ENCODE measurements at regions of chr17 and their contacts with region 1.

Region 1: GRCh38 chr17:44218344-44219107 is 949 bp downstream of the UBTF start:
- DNase-seq: peak; percentile 84 to 88 (median 86)
- H3K4me3 ChIP-seq: peak overlapping the region; percentile 22 to 90 (median 60)
- H3K4me3 Mint-ChIP-seq: peak overlapping the region; percentile 63 to 68
- H3K27ac ChIP-seq: peak overlapping the region; percentile 4 to 68
- H3K27ac Mint-ChIP-seq: peak overlapping the region in 6 of 7 donors; percentile 32 to 82 (median 68)
- H3K4me1 ChIP-seq: peaks cover 36 to 52% of the 10 kb centered on the region in 2 donors
- H3K4me1 Mint-ChIP-seq: peaks cover 54% of the 10 kb centered on the region
- H3K27me3 ChIP-seq: no peaks in the 10 kb centered on the region
- H3K27me3 Mint-ChIP-seq: peaks cover 0 to 4% (median 4%) of the 10 kb centered on the region in 3 donors
- CTCF ChIP-seq: peak; percentile 78

Region 2: DNA sequence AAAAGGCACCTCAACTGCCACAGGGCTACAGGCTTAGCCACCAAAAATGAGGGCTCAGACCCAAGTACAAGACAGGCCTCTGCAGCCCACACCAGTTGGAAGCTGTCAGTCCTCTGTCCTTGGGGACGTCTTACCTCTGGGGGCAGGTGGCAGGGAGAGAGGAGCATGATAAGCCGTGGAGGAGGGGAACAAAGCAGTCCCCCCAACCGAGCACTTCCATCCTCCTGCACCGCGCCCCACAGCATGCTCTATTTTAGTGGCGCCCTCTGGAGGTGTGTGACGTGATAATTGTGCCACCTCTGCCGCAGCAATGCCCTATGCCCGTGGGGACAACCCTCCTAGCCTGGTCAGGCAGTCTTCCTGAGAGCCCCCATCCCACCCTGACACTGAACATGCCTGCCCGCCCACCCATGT is 134.4 kb before region 1 on chr17:
- intact Hi-C with region 1: no loop called
- DNase-seq: no peak
- H3K4me3 ChIP-seq: no peak overlapping the region
- H3K4me3 Mint-ChIP-seq: no peak overlapping the region
- H3K27ac ChIP-seq: no peak overlapping the region
- H3K27ac Mint-ChIP-seq: peak overlapping the region in 2 of 7 donors; percentile 11 to 71
- H3K4me1 ChIP-seq: peaks cover 10 to 14% of the 10 kb centered on the region in 2 donors
- H3K4me1 Mint-ChIP-seq: peaks cover 13% of the 10 kb centered on the region
- H3K27me3 ChIP-seq: no peaks in the 10 kb centered on the region
- H3K27me3 Mint-ChIP-seq: peaks cover 0 to 5% (median 0%) of the 10 kb centered on the region in 3 donors
- CTCF ChIP-seq: peak; percentile 37

Region 3: DNA sequence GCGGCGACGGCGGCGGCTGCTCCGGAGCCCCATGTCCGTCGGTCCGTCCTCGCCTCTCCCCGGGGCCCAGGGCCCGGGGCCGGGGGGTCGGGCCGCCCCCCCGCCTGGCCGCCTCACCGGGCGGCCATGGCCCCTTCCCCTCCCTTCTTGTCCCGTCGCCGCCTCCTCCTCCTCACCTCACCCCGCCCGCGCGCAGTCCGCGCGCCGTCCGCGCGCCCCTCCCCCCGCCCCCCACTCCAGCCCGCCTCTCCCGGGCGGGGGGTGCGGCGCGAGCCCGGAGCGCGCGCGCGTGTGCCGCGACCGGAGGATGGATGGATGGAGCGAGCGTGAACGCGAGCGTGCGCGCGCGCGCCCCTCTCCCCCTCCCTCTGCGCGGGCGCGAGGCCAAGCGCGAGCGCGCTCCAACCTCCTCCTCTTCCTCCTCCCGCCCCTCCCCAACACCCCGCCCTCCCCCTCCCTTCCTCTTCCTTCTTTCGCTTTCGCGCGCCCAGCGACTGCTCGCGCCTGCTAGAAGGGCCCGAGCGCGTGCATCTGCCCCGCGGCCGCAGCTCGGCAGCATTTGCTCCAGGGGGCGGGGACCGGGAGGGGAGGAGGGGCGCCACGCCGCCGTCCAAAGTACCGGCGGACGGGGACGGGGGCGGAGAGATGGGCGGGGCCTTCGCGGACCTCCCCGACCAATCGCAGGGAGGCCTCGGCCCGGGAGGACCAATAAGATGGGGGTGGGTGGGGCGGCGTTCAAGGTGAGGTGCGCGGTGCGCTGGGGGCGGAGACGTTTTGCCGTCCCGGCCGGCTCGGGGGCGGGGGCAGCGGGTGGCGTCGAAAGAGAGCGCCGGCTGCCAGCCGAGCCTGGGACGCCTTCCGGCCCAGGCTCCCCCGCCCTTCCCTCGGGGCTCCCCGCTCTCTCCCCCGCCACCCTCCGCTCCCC is 18.7 kb before region 1 on chr17 and contains the start of gene ATXN7L3:
- intact Hi-C with region 1: loop called in 1 of 2 experiments (anchors 1 kb)
- DNase-seq: peak; percentile 94 to 98 (median 96)
- H3K4me3 ChIP-seq: peak within 1 kb of the TSS; percentile 94 to 97 (median 97)
- H3K4me3 Mint-ChIP-seq: peak within 1 kb of the TSS; percentile 91 to 92
- H3K27ac ChIP-seq: peak within 1 kb of the TSS; percentile 94
- H3K27ac Mint-ChIP-seq: peak within 1 kb of the TSS; percentile 92 to 98 (median 95)
- H3K4me1 ChIP-seq: peaks cover 48 to 51% of the 10 kb centered on the region in 2 donors
- H3K4me1 Mint-ChIP-seq: peaks cover 53% of the 10 kb centered on the region
- H3K27me3 ChIP-seq: no peaks in the 10 kb centered on the region
- H3K27me3 Mint-ChIP-seq: peaks cover 0 to 2% (median 0%) of the 10 kb centered on the region in 3 donors
- CTCF ChIP-seq: no peak
- polyA plus RNA-seq, gene ATXN7L3: 8.5 to 60.9 (median 9.9) TPM

Region 4: DNA sequence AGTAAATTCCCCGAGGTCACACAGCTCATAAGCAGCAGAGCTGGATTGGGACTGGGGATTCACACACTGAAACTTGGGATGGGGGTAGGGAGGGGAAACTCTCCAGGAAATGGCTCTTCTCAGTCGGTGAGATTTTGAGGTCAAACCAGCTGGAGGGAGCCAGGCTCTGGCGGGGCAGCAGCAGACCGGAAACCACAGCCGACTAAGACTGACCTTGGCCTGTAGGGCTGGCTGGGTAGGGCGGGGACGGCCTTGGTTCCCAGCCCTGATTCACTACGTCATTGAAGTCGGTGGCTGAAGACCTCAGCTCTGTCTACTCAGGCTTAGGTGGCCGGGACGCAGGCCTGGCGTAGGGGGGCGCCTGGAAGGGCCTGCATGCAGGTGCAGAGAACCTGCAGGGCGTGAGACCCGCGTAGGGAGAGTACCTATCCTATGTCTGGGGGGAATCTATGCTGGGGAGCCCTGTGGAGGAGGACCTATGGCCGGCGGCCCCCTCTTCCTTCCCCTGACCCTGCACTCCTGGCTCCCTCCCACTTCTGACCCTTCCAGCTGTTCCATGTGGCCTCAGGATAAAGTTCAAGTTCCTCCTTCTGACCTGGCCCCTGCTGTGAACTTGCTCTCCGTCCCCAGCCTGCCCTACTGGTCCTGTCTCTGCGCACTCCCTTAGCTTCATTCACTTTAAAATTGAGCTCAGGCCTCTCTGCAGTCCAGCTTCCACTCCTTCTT is 61.3 kb after region 1 on chr17:
- intact Hi-C with region 1: loop called in 1 of 2 experiments (anchors 5 kb)
- DNase-seq: peak; percentile 94 to 98 (median 97)
- H3K4me3 ChIP-seq: peak overlapping the region in 1 of 3 experiments; percentile 46
- H3K4me3 Mint-ChIP-seq: peak overlapping the region; percentile 64 to 70
- H3K27ac ChIP-seq: peak overlapping the region; percentile 64 to 80
- H3K27ac Mint-ChIP-seq: peak overlapping the region; percentile 92 to 97 (median 94)
- H3K4me1 ChIP-seq: peaks cover 23 to 25% of the 10 kb centered on the region in 2 donors
- H3K4me1 Mint-ChIP-seq: peaks cover 30% of the 10 kb centered on the region
- H3K27me3 ChIP-seq: peaks cover 0 to 7% of the 10 kb centered on the region in 2 donors
- H3K27me3 Mint-ChIP-seq: peaks cover 24 to 33% (median 28%) of the 10 kb centered on the region in 3 donors
- CTCF ChIP-seq: no peak

Region 5: GRCh38 chr17:44324571-44325275 is 106.2 kb after region 1 on chr17 and contains the start of gene SLC25A39:
- intact Hi-C with region 1: loop called (anchors 2 kb)
- DNase-seq: peak; percentile 91 to 93 (median 92)
- H3K4me3 ChIP-seq: peak within 1 kb of the TSS; percentile 47 to 85 (median 71)
- H3K4me3 Mint-ChIP-seq: peak within 1 kb of the TSS; percentile 89 to 92
- H3K27ac ChIP-seq: peak within 1 kb of the TSS; percentile 71 to 87
- H3K27ac Mint-ChIP-seq: peak within 1 kb of the TSS; percentile 92 to 96 (median 95)
- H3K4me1 ChIP-seq: peaks cover 29 to 39% of the 10 kb centered on the region in 2 donors
- H3K4me1 Mint-ChIP-seq: peaks cover 34% of the 10 kb centered on the region
- H3K27me3 ChIP-seq: no peaks in the 10 kb centered on the region
- H3K27me3 Mint-ChIP-seq: no peaks in the 10 kb centered on the region
- CTCF ChIP-seq: no peak
- polyA plus RNA-seq, gene SLC25A39: 64.0 to 74.8 (median 64.5) TPM

Region 6: DNA sequence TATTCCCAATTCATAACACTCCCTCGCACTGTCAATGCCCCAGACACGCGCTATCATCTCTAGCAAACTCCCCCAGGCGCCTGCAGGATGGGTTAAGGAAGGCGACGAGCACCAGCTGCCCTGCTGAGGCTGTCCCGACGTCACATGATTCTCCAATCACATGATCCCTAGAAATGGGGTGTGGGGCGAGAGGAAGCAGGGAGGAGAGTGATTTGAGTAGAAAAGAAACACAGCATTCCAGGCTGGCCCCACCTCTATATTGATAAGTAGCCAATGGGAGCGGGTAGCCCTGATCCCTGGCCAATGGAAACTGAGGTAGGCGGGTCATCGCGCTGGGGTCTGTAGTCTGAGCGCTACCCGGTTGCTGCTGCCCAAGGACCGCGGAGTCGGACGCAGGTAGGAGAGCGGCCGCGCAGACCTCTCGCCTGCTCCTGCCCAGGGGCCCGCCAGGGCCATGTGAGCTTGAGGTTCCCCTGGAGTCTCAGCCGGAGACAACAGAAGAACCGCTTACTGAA is 126.5 kb after region 1 on chr17 and contains the start of gene GRN:
- intact Hi-C with region 1: loop called in 1 of 2 experiments (anchors 2 kb)
- DNase-seq: peak; percentile 95 to 98 (median 97)
- H3K4me3 ChIP-seq: peak within 1 kb of the TSS; percentile 71 to 98 (median 92)
- H3K4me3 Mint-ChIP-seq: peak within 1 kb of the TSS; percentile 96 to 99
- H3K27ac ChIP-seq: peak within 1 kb of the TSS; percentile 88 to 98
- H3K27ac Mint-ChIP-seq: peak within 1 kb of the TSS; percentile 93 to 99 (median 98)
- H3K4me1 ChIP-seq: peaks cover 61 to 69% of the 10 kb centered on the region in 2 donors
- H3K4me1 Mint-ChIP-seq: peaks cover 68% of the 10 kb centered on the region
- H3K27me3 ChIP-seq: no peaks in the 10 kb centered on the region
- H3K27me3 Mint-ChIP-seq: peaks cover 0 to 2% (median 0%) of the 10 kb centered on the region in 3 donors
- CTCF ChIP-seq: no peak
- polyA plus RNA-seq, gene GRN: 1,303 to 1,960 (median 1,361) TPM

Measured in CD14-positive monocyte (primary cell).